Panc1 (cell line): ENCODE measurements at regions of chr9 and their contacts with region 1.

Region 1: GRCh38 chr9:69180670-69181069 is 6.6 kb downstream of the TJP2 start:
- DNase-seq: peak; percentile 78
- ATAC-seq: peak; percentile 90
- H3K4me3 ChIP-seq: peak overlapping the region in 1 of 2 experiments; percentile 30; a peak in 2 of 4 replicates
- H3K27ac ChIP-seq: peak overlapping the region; percentile 73
- H3K4me1 ChIP-seq: peaks cover 57% of the 10 kb centered on the region
- H3K27me3 ChIP-seq: no peaks in the 10 kb centered on the region
- CTCF ChIP-seq: no peak

Region 2: DNA sequence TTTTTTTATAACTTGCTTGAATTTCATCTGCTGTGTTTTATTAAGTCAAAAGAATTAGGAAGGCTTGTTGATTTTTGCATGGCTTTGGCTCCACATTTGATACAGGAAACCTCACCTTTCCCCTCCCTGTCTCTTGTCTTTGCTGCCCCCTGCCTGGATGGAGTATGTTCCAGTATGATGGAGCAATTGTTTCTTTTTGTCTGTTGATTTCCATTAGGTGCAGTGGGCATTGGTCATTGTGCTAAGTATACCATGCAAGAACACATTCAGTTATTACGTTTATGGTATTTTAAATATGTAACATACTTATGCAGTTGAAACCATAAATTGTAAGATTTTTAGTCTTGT is 13.0 kb after region 1 on chr9:
- CTCF ChIA-PET with region 1: interaction called, 13 read pairs
- POLR2A ChIA-PET with region 1: no interaction called
- in situ Hi-C with region 1: no loop called
- intact Hi-C with region 1: no loop called
- DNase-seq: no peak
- ATAC-seq: no peak; the same call in 1 of the 2 replicates
- H3K4me3 ChIP-seq: no peak overlapping the region
- H3K27ac ChIP-seq: no peak overlapping the region
- H3K4me1 ChIP-seq: peaks cover 6% of the 10 kb centered on the region
- H3K27me3 ChIP-seq: no peaks in the 10 kb centered on the region
- CTCF ChIP-seq: 0 out of 2 replicates have a peak, but pooled peaks have one; percentile 0